ENCODE measurements at regions of chr11 and their contacts with region 1.

Region 1: GRCh38 chr11:85595285-85595884 is 31.8 kb downstream of the DLG2 start:
- DNase-seq: peak in 2 of 9 experiments; percentile 62 to 72
- ATAC-seq: peak; percentile 58
- H3K4me3 ChIP-seq: no peak overlapping the region
- H3K4me3 Mint-ChIP-seq: no peak overlapping the region
- H3K27ac ChIP-seq: no peak overlapping the region
- H3K27ac Mint-ChIP-seq: no peak overlapping the region
- H3K4me1 ChIP-seq: no peaks in the 10 kb centered on the region
- H3K4me1 Mint-ChIP-seq: no peaks in the 10 kb centered on the region
- H3K27me3 ChIP-seq: no peaks in the 10 kb centered on the region
- H3K27me3 Mint-ChIP-seq: peaks cover 2% of the 10 kb centered on the region
- CTCF ChIP-seq: peak; percentile 91

Region 2: DNA sequence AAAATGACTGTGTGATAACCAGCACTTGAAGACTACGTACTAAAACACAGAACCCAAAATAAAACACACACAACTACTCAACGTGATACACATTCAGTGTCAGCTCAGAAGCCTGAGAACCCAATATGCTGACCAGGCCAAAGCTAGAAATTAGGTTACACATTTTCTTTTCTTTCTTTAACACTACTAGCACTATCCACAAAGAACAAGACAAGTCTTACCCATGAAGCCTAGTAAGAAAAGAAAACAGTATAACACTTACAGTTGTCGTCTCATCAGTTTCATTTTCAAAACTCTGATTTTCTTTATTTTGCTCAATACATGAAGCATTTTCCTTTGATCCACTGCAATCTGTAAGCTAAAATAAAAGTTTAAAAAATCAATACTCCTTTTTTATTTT is 441.1 kb before region 1 on chr11:
- CTCF ChIA-PET with region 1: no interaction called
- POLR2A ChIA-PET with region 1: no interaction called
- intact Hi-C with region 1: no loop called
- DNase-seq: no peak
- ATAC-seq: no peak
- H3K4me3 ChIP-seq: no peak overlapping the region
- H3K4me3 Mint-ChIP-seq: no peak overlapping the region
- H3K27ac ChIP-seq: no peak overlapping the region
- H3K27ac Mint-ChIP-seq: no peak overlapping the region
- H3K4me1 ChIP-seq: no peaks in the 10 kb centered on the region
- H3K4me1 Mint-ChIP-seq: no peaks in the 10 kb centered on the region
- H3K27me3 ChIP-seq: no peaks in the 10 kb centered on the region
- H3K27me3 Mint-ChIP-seq: no peaks in the 10 kb centered on the region
- CTCF ChIP-seq: no peak

Region 3: GRCh38 chr11:85664615-85665481 is 69.5 kb after region 1 on chr11 and contains the start of gene CREBZF:
- CTCF ChIA-PET with region 1: no interaction called
- POLR2A ChIA-PET with region 1: no interaction called
- intact Hi-C with region 1: loop called in 1 of 2 experiments (anchors 1 kb)
- DNase-seq: peak; percentile 84 to 96 (median 94)
- ATAC-seq: peak; percentile 61
- H3K4me3 ChIP-seq: peak within 1 kb of the TSS; percentile 78 to 94
- H3K4me3 Mint-ChIP-seq: peak within 1 kb of the TSS; percentile 100
- H3K27ac ChIP-seq: peak within 1 kb of the TSS; percentile 96 to 97
- H3K27ac Mint-ChIP-seq: peak within 1 kb of the TSS; percentile 100
- H3K4me1 ChIP-seq: peaks cover 38% of the 10 kb centered on the region
- H3K4me1 Mint-ChIP-seq: peaks cover 43% of the 10 kb centered on the region
- H3K27me3 ChIP-seq: no peaks in the 10 kb centered on the region
- H3K27me3 Mint-ChIP-seq: no peaks in the 10 kb centered on the region
- CTCF ChIP-seq: no peak
- total RNA-seq, gene CREBZF: 32.2 to 33.3 TPM

Region 4: GRCh38 chr11:85988780-85989179 is 393.4 kb after region 1 on chr11:
- CTCF ChIA-PET with region 1: no interaction called
- POLR2A ChIA-PET with region 1: no interaction called
- intact Hi-C with region 1: loop called (anchors 10 kb)
- DNase-seq: no peak
- ATAC-seq: no peak
- H3K4me3 ChIP-seq: no peak overlapping the region
- H3K4me3 Mint-ChIP-seq: no peak overlapping the region
- H3K27ac ChIP-seq: no peak overlapping the region
- H3K27ac Mint-ChIP-seq: peak overlapping the region; percentile 41
- H3K4me1 ChIP-seq: no peaks in the 10 kb centered on the region
- H3K4me1 Mint-ChIP-seq: peaks cover 23% of the 10 kb centered on the region
- H3K27me3 ChIP-seq: no peaks in the 10 kb centered on the region
- H3K27me3 Mint-ChIP-seq: no peaks in the 10 kb centered on the region
- CTCF ChIP-seq: no peak

Region 5: GRCh38 chr11:86193297-86194095 is 598.1 kb after region 1 on chr11:
- CTCF ChIA-PET with region 1: interaction called, 4 read pairs
- POLR2A ChIA-PET with region 1: no interaction called
- intact Hi-C with region 1: loop called in 1 of 2 experiments (anchors 1 kb)
- DNase-seq: peak; percentile 26 to 86 (median 59)
- ATAC-seq: peak; percentile 100
- H3K4me3 ChIP-seq: peak overlapping the region; percentile 37 to 54
- H3K4me3 Mint-ChIP-seq: peak overlapping the region; percentile 83
- H3K27ac ChIP-seq: peak overlapping the region in 1 of 2 experiments; percentile 60
- H3K27ac Mint-ChIP-seq: peak overlapping the region; percentile 73
- H3K4me1 ChIP-seq: peaks cover 6% of the 10 kb centered on the region
- H3K4me1 Mint-ChIP-seq: peaks cover 15% of the 10 kb centered on the region
- H3K27me3 ChIP-seq: no peaks in the 10 kb centered on the region
- H3K27me3 Mint-ChIP-seq: no peaks in the 10 kb centered on the region
- CTCF ChIP-seq: peak; percentile 80

Region 6: GRCh38 chr11:86291466-86292262 is 696.3 kb after region 1 on chr11:
- CTCF ChIA-PET with region 1: no interaction called
- POLR2A ChIA-PET with region 1: no interaction called
- intact Hi-C with region 1: loop called (anchors 1 to 5 kb)
- DNase-seq: peak; percentile 21 to 74 (median 60)
- ATAC-seq: peak; percentile 67
- H3K4me3 ChIP-seq: no peak overlapping the region
- H3K4me3 Mint-ChIP-seq: no peak overlapping the region
- H3K27ac ChIP-seq: no peak overlapping the region
- H3K27ac Mint-ChIP-seq: no peak overlapping the region
- H3K4me1 ChIP-seq: no peaks in the 10 kb centered on the region
- H3K4me1 Mint-ChIP-seq: peaks cover 13% of the 10 kb centered on the region
- H3K27me3 ChIP-seq: no peaks in the 10 kb centered on the region
- H3K27me3 Mint-ChIP-seq: no peaks in the 10 kb centered on the region
- CTCF ChIP-seq: peak; percentile 73

Region 7: DNA sequence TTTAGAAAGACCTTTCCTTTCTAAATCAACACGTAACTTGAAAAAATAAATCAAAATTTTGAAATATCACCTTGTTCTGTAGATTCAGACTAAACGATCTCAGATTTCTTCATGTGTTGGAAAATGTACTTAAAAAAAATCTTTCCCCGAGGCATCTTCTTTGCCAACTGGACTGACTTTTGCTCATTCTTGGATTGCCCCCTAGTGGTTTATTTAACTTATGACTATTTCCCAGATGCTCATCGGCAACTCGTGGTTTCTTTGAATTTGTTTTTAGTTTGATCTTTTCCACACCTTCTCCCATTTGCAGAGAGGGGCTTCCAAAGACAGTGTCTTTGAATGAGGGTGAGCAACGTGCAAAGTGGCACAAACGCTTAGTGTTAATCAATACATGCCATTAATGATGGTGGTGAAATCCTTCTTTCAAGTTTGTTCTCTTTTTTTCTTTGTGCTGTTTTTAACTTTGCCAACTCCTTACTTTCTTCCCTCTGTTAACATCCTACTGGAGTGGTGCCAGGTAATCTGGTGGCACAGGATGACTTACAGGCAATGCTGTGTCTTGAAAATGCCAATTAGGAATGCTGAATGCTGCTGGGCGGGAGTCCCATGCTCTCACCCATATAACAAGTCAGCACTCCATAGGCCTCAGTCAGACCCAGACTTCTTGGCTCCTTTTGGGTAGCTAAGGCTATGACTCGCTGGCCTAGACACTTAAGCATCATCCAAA is 1223.2 kb after region 1 on chr11:
- CTCF ChIA-PET with region 1: no interaction called
- POLR2A ChIA-PET with region 1: no interaction called
- intact Hi-C with region 1: loop called in 1 of 2 experiments (anchors 1 kb)
- DNase-seq: peak in 2 of 9 experiments; percentile 57 to 69
- ATAC-seq: no peak
- H3K4me3 ChIP-seq: no peak overlapping the region
- H3K4me3 Mint-ChIP-seq: no peak overlapping the region
- H3K27ac ChIP-seq: no peak overlapping the region
- H3K27ac Mint-ChIP-seq: no peak overlapping the region
- H3K4me1 ChIP-seq: no peaks in the 10 kb centered on the region
- H3K4me1 Mint-ChIP-seq: peaks cover 3% of the 10 kb centered on the region
- H3K27me3 ChIP-seq: no peaks in the 10 kb centered on the region
- H3K27me3 Mint-ChIP-seq: peaks cover 14% of the 10 kb centered on the region
- CTCF ChIP-seq: peak; percentile 74